Activated naive CD4-positive, alpha-beta T cell treated with anti-CD3 and anti-CD28 coated beads for 36 hours (primary cell): ENCODE measurements at regions of chr3 and their contacts with region 1.

Region 1: GRCh38 chr3:72847751-72848702 is at the start of gene SHQ1:
- DNase-seq: peak; percentile 98
- H3K4me3 Mint-ChIP-seq: peak within 1 kb of the TSS; percentile 97
- H3K27ac Mint-ChIP-seq: peak within 1 kb of the TSS; percentile 57
- H3K4me1 Mint-ChIP-seq: peaks cover 47% of the 10 kb centered on the region
- H3K27me3 Mint-ChIP-seq: no peaks in the 10 kb centered on the region
- total RNA-seq, gene SHQ1: 19.9 to 20.5 TPM

Region 2: GRCh38 chr3:72447059-72447946 is 400.7 kb before region 1 on chr3:
- CTCF ChIA-PET with region 1: no interaction called
- intact Hi-C with region 1: loop called (anchors 2 kb)
- DNase-seq: peak; percentile 88
- H3K4me3 Mint-ChIP-seq: peak overlapping the region; percentile 54
- H3K27ac Mint-ChIP-seq: no peak overlapping the region
- H3K4me1 Mint-ChIP-seq: peaks cover 37% of the 10 kb centered on the region
- H3K27me3 Mint-ChIP-seq: peaks cover 12% of the 10 kb centered on the region

Region 3: DNA sequence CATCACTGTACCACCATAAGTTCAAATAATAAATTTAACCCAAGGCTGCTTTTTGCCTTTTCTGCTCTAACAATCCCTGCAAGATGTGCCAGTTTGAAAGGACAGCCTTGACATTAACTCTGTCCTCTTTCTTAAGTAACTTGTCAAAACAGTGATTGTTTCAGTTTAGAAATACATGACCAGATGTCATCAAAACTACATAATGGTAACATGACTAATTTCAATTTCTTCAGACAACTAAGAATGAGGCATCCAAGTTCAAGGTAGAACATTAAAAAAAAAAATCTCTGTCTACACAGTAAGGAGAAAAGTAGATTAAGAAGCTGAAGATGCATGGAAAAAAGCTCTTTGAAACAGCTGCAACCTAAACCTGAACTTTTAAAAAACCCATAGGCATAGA is 47.2 kb before region 1 on chr3:
- CTCF ChIA-PET with region 1: no interaction called
- intact Hi-C with region 1: loop called (anchors 1 kb)
- DNase-seq: no peak
- H3K4me3 Mint-ChIP-seq: no peak overlapping the region
- H3K27ac Mint-ChIP-seq: no peak overlapping the region
- H3K4me1 Mint-ChIP-seq: peaks cover 26% of the 10 kb centered on the region
- H3K27me3 Mint-ChIP-seq: no peaks in the 10 kb centered on the region

Region 4: DNA sequence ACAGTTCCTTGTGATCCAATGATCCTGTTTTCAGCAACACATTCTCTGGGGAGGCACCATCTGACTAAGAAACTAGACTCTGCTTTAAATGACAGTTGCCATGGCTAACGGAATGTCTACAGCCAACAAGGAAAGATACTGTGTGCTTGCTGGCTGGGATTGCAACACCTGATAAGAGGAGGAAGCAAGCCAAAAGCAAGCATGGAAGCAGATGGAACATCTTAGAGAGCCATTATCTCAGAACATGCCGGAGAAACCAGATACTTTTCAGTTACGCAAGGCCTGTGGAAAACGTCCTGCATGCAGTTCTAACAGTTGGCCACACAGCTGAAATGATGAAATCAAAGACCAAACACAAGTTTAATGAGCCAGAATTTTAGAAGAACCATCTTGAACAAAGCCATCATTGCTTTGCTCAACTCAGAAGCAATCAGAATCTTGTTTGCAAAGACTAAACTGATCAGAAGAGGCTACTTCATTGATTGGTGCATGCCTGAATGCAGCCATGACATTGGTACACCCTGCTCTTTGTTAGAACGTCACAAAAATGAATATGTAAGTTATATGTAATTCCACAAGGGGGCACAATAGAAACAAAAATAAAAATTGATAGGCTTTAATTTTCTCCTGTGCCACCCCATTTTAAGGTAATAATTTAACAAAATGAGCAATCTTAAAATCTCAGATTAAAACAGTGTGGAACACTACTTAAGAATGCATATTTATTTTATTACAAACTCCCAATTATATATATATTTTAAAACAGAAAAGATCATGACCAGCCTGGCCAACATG is 90.6 kb after region 1 on chr3:
- CTCF ChIA-PET with region 1: no interaction called
- intact Hi-C with region 1: loop called (anchors 1 kb)
- DNase-seq: peak; percentile 26
- H3K4me3 Mint-ChIP-seq: no peak overlapping the region
- H3K27ac Mint-ChIP-seq: no peak overlapping the region
- H3K4me1 Mint-ChIP-seq: no peaks in the 10 kb centered on the region
- H3K27me3 Mint-ChIP-seq: no peaks in the 10 kb centered on the region